RWPE1 (cell line): ENCODE measurements at regions of chr12 and their contacts with region 1.

Region 1: GRCh38 chr12:124767066-124767821 is 96.4 kb downstream of the SCARB1 start:
- DNase-seq: peak; percentile 78
- H3K27ac ChIP-seq: no peak overlapping the region
- CTCF ChIP-seq: peak; percentile 97

Region 2: GRCh38 chr12:124740691-124741137 is 26.5 kb before region 1 on chr12:
- CTCF ChIA-PET with region 1: interaction called, 11 read pairs
- POLR2A ChIA-PET with region 1: no interaction called
- DNase-seq: peak; percentile 49
- H3K27ac ChIP-seq: peak overlapping the region; percentile 65
- CTCF ChIP-seq: no peak; the same call in 1 of the 2 replicates